Heart left ventricle (tissue), 16 donors: ENCODE measurements at regions of chr1 and their contacts with region 1.

Region 1: GRCh38 chr1:154974063-154974807 is at the start of gene CKS1B:
- DNase-seq: peak; percentile 95 to 99 (median 98)
- ATAC-seq: peak; percentile 86 to 93 (median 88)
- H3K4me3 ChIP-seq: peak within 1 kb of the TSS; percentile 51 to 84 (median 74)
- H3K27ac ChIP-seq: peak within 1 kb of the TSS; percentile 92 to 99 (median 99)
- H3K4me1 ChIP-seq: peaks cover 22 to 61% (median 50%) of the 10 kb centered on the region in 12 donors
- H3K27me3 ChIP-seq: no peaks in the 10 kb centered on the region
- CTCF ChIP-seq: no peak
- POLR2A ChIP-seq: peak in 1 of 2 donors; percentile 51
- total RNA-seq, gene CKS1B: 11.0 to 30.0 (median 16.7) TPM

Region 2: GRCh38 chr1:154936555-154937084 is 37.6 kb before region 1 on chr1 and contains the start of gene PMVK:
- intact Hi-C with region 1: loop called in 1 of 10 experiments (anchors 5 kb)
- DNase-seq: peak; percentile 96 to 97 (median 97)
- ATAC-seq: peak; percentile 93 to 96 (median 94)
- H3K4me3 ChIP-seq: peak within 1 kb of the TSS; percentile 39 to 80 (median 66)
- H3K27ac ChIP-seq: peak within 1 kb of the TSS; percentile 90 to 100 (median 98)
- H3K4me1 ChIP-seq: peaks cover 0 to 43% (median 18%) of the 10 kb centered on the region in 12 donors
- H3K27me3 ChIP-seq: no peaks in the 10 kb centered on the region
- CTCF ChIP-seq: peak in 10 of 12 donors; percentile 17 to 55 (median 37)
- POLR2A ChIP-seq: peak in 1 of 2 donors; percentile 46
- total RNA-seq, gene PMVK: 12.8 to 50.8 (median 37.5) TPM

Region 3: DNA sequence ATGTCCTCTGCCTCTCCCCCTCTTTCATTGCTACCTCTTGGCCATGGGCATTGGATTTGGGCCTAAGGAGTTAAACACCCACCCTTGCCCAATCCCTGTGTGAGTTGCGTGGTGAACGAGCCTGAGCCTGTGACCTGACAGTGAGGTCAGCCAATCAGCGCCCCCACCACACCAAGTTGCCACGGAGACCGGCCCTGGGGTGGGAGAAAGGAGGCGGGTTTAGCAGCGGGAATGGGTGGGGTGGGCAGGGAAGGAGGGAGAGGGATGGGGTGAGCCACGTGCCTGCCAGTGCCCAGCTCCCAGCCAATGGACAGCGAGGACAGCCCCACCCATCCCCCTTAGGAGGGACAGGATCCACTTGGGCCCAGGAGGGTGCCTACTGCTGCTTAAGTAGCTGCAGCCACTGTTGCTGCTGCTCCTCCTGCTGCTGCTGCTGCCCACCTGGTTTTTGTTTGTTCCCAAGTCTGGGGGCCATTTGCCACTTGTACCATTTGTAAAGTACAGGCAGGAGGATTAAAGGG is 37.9 kb after region 1 on chr1:
- intact Hi-C with region 1: loop called in 4 of 10 experiments (anchors 5 kb)
- DNase-seq: peak; percentile 61 to 80 (median 72)
- ATAC-seq: peak; percentile 29 to 65 (median 46)
- H3K4me3 ChIP-seq: peak overlapping the region in 1 of 12 donors; percentile 12
- H3K27ac ChIP-seq: peak overlapping the region in 10 of 12 donors; percentile 24 to 97 (median 48)
- H3K4me1 ChIP-seq: peaks cover 3 to 78% (median 41%) of the 10 kb centered on the region in 12 donors
- H3K27me3 ChIP-seq: no peaks in the 10 kb centered on the region
- CTCF ChIP-seq: no peak
- POLR2A ChIP-seq: peak in 1 of 2 donors; percentile 21

Region 4: GRCh38 chr1:155050560-155051341 is 76.5 kb after region 1 on chr1 and contains the start of gene ADAM15:
- intact Hi-C with region 1: loop called in 2 of 10 experiments (anchors 5 kb)
- DNase-seq: peak; percentile 86 to 94 (median 86)
- ATAC-seq: peak; percentile 43 to 90 (median 72)
- H3K4me3 ChIP-seq: peak within 1 kb of the TSS; percentile 54 to 99 (median 86)
- H3K27ac ChIP-seq: peak within 1 kb of the TSS; percentile 86 to 99 (median 94)
- H3K4me1 ChIP-seq: peaks cover 0 to 43% (median 23%) of the 10 kb centered on the region in 12 donors
- H3K27me3 ChIP-seq: no peaks in the 10 kb centered on the region
- CTCF ChIP-seq: peak; percentile 85 to 97 (median 92)
- POLR2A ChIP-seq: no peak
- total RNA-seq, gene ADAM15: 55.8 to 199 (median 67.5) TPM

Region 5: DNA sequence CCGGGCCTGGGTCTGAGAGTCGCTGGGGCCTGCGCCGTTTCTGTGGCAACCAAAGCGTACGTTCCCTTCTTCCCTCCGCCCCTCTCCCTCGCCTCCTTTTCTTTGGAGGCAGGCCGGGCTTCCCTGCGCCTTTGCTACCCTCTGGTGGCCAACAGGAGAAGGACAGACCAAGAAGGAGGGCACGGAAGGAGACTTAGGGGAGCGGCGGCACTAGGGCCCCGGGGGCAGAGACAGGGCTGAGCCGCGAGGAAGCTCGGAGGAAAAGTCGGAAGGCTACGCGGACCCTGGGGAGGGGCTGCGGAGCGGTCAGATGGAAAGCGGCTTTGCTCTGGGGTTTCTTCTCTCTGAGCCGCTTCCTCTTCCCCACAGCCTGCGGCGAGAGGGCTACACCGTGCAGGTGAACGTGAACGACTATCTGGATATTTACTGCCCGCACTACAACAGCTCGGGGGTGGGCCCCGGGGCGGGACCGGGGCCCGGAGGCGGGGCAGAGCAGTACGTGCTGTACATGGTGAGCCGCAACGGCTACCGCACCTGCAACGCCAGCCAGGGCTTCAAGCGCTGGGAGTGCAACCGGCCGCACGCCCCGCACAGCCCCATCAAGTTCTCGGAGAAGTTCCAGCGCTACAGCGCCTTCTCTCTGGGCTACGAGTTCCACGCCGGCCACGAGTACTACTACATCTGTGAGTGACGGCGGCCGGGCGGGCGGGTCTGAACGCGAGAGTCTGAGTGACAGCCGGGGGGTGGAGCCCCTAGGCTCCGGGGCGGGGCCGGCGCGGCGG is 110.7 kb after region 1 on chr1:
- intact Hi-C with region 1: loop called in 2 of 10 experiments (anchors 5 to 10 kb)
- DNase-seq: peak; percentile 92 to 96 (median 93)
- ATAC-seq: peak; percentile 83 to 91 (median 88)
- H3K4me3 ChIP-seq: peak overlapping the region; percentile 52 to 87 (median 73)
- H3K27ac ChIP-seq: peak overlapping the region; percentile 65 to 97 (median 88)
- H3K4me1 ChIP-seq: peaks cover 9 to 63% (median 44%) of the 10 kb centered on the region in 12 donors
- H3K27me3 ChIP-seq: peaks cover 38 to 46% (median 45%) of the 10 kb centered on the region in 9 donors
- CTCF ChIP-seq: peak; percentile 89 to 98 (median 93)
- POLR2A ChIP-seq: no peak